Upper lobe of right lung (tissue), 1 donor: ENCODE measurements at regions of chr6 and their contacts with region 1.

Region 1: GRCh38 chr6:27081931-27082330 is 165.6 kb upstream of the PRSS16 start:
- DNase-seq: no peak
- ATAC-seq: no peak
- H3K4me3 ChIP-seq: no peak overlapping the region
- H3K27ac ChIP-seq: no peak overlapping the region
- H3K4me1 ChIP-seq: no peaks in the 10 kb centered on the region
- H3K27me3 ChIP-seq: peaks cover 25% of the 10 kb centered on the region
- CTCF ChIP-seq: no peak

Region 2: GRCh38 chr6:26607434-26608230 is 474.3 kb before region 1 on chr6:
- intact Hi-C with region 1: loop called (anchors 10 kb)
- DNase-seq: no peak
- ATAC-seq: peak; percentile 90
- H3K4me3 ChIP-seq: peak overlapping the region; percentile 24
- H3K27ac ChIP-seq: no peak overlapping the region
- H3K4me1 ChIP-seq: no peaks in the 10 kb centered on the region
- H3K27me3 ChIP-seq: peaks cover 2% of the 10 kb centered on the region
- CTCF ChIP-seq: peak; percentile 66